Activated CD4-positive, alpha-beta T cell treated with anti-CD3 and anti-CD28 coated beads for 36 hours (primary cell): ENCODE measurements at regions of chr14 and their contacts with region 1.

Region 1: DNA sequence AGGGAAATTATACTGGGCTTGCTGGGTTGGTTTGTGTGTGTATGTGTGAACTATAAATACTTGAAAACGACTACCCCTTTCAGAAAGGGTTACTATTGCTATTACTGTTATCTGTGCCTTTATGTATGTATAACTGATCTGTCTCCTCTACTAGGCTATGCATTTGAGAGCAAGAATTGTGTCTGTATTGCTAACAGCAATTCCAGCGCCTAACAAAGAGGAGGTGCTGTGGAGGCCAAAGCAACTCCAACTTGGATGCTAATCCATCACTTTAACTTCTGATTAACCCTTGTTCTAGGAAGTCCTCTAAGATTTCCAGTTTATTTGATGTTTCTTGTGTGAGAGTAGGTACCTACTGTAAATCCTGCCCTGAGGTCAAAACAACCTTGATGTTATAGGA is 313.9 kb downstream of the PCNX1 start:
- DNase-seq: no peak
- ATAC-seq: no peak
- H3K4me3 Mint-ChIP-seq: no peak overlapping the region
- H3K27ac Mint-ChIP-seq: no peak overlapping the region
- H3K4me1 Mint-ChIP-seq: peaks cover 15% of the 10 kb centered on the region
- H3K27me3 Mint-ChIP-seq: no peaks in the 10 kb centered on the region

Region 2: GRCh38 chr14:71267007-71267513 is 45.9 kb after region 1 on chr14:
- CTCF ChIA-PET with region 1: no interaction called
- POLR2A ChIA-PET with region 1: no interaction called
- intact Hi-C with region 1: loop called (anchors 1 to 2 kb)
- DNase-seq: peak; percentile 26
- ATAC-seq: peak; percentile 88
- H3K4me3 Mint-ChIP-seq: no peak overlapping the region
- H3K27ac Mint-ChIP-seq: no peak overlapping the region
- H3K4me1 Mint-ChIP-seq: peaks cover 19% of the 10 kb centered on the region
- H3K27me3 Mint-ChIP-seq: no peaks in the 10 kb centered on the region

Region 3: DNA sequence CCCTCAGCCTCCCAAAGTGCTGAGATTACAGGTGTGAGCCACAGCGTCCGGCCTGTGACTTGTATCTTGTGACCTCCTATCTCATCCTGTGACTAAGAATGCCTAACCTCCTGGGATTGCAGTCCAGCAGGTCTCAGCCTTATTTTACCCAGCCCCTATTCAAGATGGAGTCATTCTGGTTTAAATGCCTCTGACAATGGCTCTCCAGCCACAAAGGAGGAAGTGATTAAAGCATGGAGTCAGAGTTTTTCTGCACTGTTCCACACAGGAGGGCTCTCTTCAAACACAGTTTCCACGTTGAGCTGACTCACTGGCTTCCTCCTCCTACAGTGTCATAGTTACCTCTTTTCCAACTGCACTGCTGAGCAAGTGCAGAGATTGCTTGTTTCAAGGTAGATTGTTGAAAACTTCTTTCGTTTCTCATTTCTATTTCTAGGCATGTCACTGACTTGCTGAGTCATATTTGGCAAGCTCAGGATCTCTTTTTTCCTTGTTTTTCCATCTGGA is 69.9 kb after region 1 on chr14:
- CTCF ChIA-PET with region 1: interaction called, 4 read pairs
- POLR2A ChIA-PET with region 1: no interaction called
- intact Hi-C with region 1: loop called in 1 of 2 experiments (anchors 1 kb)
- DNase-seq: peak; percentile 72
- ATAC-seq: peak; percentile 100
- H3K4me3 Mint-ChIP-seq: no peak overlapping the region
- H3K27ac Mint-ChIP-seq: peak overlapping the region; percentile 45
- H3K4me1 Mint-ChIP-seq: peaks cover 18% of the 10 kb centered on the region
- H3K27me3 Mint-ChIP-seq: peaks cover 2% of the 10 kb centered on the region